Sigmoid colon (tissue), 7 donors: ENCODE measurements at regions of chr10 and their contacts with region 1.

Region 1: DNA sequence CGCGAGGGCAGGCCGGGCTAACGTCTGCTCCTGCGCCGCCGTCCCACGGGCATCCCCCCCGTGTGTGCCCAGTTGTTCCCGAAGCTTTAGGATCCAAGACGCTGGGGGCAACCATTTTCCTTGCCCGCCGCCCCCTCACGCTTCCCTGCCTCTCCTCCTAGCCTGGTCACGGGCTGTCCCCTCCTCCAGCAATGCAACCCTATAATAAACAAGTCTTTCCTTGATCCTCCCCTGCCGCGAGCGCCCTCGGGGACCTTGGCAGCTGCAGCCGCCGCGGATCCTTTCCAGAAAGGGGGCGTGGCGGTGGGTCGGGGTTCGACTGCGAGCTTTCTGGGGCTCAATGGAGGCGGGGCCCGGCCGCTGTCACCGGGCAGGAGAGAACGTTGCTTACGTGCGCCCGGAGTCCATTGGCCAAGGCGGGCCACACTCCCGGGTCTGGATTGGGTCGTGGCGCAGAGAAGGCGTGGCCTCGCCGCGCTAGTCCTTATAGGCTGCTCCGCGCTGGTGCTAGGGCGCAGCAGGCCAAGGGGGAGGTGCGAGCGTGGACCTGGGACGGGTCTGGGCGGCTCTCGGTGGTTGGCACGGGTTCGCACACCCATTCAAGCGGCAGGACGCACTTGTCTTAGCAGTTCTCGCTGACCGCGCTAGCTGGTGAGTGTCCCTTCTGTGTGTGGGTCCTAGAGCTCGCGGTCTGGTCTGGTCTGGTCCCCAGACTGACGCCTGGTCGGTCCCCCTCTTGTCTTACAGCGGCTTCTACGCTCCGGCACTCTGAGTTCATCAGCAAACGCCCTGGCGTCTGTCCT is at the start of gene DDIT4:
- DNase-seq: peak; percentile 100
- H3K4me3 ChIP-seq: peak within 1 kb of the TSS; percentile 76 to 90 (median 81)
- H3K27ac ChIP-seq: peak within 1 kb of the TSS; percentile 96 to 99 (median 97)
- H3K4me1 ChIP-seq: peaks cover 0 to 32% (median 29%) of the 10 kb centered on the region in 4 donors
- H3K27me3 ChIP-seq: no peaks in the 10 kb centered on the region
- CTCF ChIP-seq: no peak
- EP300 ChIP-seq: peak in 2 of 4 donors; percentile 53 to 67
- POLR2A ChIP-seq: peak; percentile 97 to 100
- total RNA-seq, gene DDIT4: 77.2 to 202 (median 133) TPM

Region 2: DNA sequence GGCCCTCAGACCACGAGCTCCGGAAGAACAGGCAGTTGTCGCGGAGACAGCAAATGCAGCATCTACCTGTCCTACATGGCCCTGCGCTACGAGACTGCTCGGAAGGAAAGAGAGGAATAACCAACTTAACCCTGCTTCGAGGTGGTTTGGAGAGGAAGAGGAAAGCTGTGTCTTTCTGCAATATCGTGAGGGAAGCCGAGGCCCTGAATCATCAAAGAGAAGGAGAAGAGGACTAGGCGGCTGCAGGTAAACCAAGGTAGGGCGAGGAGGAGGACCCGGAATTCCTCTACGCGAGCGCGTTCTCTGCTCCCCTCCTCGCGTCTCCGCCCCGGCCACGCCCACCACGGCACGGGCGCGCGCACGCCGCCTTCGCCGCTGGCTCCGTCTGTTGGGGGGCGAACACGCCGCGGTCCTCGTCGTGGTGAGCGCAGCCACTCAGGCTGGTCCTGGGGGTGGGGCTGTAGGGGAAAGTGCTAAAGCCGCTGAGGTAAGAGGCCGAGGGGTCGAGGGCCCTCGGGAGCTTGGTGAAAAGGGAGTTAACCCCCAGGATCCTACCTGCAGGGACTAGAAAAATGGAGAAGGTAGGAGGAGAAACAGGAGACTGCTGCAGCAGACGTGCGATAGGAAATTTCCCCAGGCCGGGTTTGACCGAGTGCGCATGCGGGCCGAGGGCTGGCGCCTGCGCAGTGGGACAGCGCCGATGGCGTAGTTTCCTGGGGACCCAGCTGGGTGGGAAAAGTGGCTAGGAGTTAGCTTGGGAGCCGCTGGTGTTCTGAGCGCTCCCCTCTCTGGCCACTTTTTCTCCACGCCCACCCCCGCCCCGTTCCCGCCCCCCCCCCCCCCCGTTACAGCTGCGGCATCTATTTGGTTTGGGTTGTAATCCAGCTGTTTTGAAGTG is 57.7 kb before region 1 on chr10 and contains the starts of genes ANAPC16 and ASCC1:
- intact Hi-C with region 1: loop called (anchors 2 kb)
- DNase-seq: peak; percentile 96
- H3K4me3 ChIP-seq: peak within 1 kb of the TSS; percentile 60 to 79 (median 70)
- H3K27ac ChIP-seq: peak within 1 kb of the TSS; percentile 86 to 99 (median 92)
- H3K4me1 ChIP-seq: peaks cover 0 to 51% (median 34%) of the 10 kb centered on the region in 4 donors
- H3K27me3 ChIP-seq: no peaks in the 10 kb centered on the region
- CTCF ChIP-seq: no peak
- EP300 ChIP-seq: peak in 1 of 4 donors; percentile 87
- POLR2A ChIP-seq: peak; percentile 88 to 95
- total RNA-seq, gene ANAPC16: 80.0 to 228 (median 157) TPM
- total RNA-seq, gene ASCC1: 21.0 to 53.7 (median 37.1) TPM

Region 3: GRCh38 chr10:72248468-72249151 is 25.0 kb before region 1 on chr10:
- intact Hi-C with region 1: loop called (anchors 2 kb)
- DNase-seq: peak; percentile 95
- H3K4me3 ChIP-seq: peak overlapping the region in 3 of 4 donors; percentile 15 to 36 (median 23)
- H3K27ac ChIP-seq: peak overlapping the region; percentile 91 to 95 (median 91)
- H3K4me1 ChIP-seq: peaks cover 0 to 98% (median 90%) of the 10 kb centered on the region in 4 donors
- H3K27me3 ChIP-seq: no peaks in the 10 kb centered on the region
- CTCF ChIP-seq: no peak
- EP300 ChIP-seq: peak; percentile 87 to 97 (median 91)
- POLR2A ChIP-seq: peak; percentile 24 to 28

Region 4: DNA sequence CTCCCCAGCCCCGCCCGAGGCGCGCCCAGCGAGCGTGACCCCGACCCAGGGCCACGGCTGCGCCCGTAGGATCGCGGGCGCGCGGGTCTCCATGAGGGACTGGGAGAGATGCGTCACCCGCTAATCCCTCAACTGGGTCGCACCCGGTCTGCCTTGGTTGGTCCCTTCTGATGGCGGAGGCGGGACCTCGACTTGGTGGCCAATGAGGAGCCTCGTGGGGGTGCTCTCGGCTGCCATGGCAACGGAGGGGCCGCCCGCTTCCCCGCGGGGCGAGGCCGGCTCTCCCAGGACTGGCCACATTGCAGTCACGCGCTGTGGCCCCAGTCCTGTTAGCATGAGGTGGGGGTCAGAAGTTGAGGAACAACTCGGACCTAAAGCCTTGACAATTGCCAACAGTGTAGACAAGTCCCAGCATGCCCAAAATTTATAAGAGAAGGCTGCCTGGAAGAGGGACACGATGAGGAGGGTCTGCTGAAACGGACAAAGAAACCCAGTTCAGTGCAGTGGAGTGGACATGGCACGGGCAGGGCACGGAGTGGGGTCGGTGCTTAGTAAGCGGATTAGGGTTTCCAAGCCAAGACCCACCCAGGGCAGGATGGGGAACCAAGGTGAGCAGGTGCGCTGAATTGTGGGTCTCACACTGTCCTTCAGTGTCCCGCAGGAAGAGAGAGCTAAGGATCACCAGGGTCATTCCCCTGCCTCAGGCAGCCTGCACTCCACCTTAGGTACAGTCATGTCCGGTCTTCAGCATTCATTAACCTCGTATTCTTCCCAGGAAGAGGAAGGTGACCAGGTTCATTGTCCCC is 24.6 kb after region 1 on chr10:
- intact Hi-C with region 1: loop called (anchors 2 kb)
- DNase-seq: peak; percentile 100
- H3K4me3 ChIP-seq: peak overlapping the region; percentile 57 to 83 (median 66)
- H3K27ac ChIP-seq: peak overlapping the region; percentile 90 to 94 (median 93)
- H3K4me1 ChIP-seq: peaks cover 0 to 17% (median 11%) of the 10 kb centered on the region in 4 donors
- H3K27me3 ChIP-seq: no peaks in the 10 kb centered on the region
- CTCF ChIP-seq: no peak
- EP300 ChIP-seq: no peak
- POLR2A ChIP-seq: peak; percentile 29 to 69

Region 5: DNA sequence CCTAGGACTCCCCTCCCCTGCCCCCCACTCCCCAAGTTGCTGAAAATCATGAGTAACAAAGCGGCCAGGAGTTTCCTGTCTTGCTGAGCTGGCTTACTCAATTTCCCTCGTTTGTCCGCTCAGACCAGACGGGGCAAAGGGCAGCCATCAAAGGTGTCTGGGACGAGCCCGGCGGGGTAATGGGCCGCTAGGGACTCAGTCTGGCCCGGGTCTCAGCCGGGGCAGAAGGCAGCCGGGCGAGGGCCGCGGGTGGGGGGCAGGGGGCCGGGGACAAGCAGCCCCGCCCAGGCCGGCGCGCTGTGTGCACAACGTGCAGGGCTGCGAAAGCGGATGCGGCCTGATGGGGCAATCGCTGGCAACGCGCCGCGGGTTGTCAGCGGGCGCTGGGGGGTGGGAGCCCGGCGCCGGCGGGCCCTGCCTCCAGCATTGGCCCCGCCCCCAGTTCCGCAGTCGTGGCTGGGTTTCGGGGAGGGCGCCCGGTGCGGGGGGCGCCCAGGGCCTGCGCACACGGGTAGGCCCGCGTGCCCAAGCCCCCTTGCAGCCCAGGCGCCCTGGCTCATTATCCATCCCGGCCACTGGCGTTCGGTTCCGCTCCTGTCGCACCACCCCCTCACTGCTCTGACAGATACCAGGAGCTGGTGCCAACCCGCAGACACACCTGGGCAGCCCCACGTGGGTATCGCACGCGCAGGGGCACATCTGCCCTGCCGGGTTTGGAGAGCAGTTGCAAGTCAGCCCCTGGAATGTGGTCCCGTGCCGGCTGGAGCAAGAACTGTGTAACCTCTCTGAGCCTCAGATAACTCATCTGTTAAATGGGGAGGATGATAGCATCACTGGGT is 46.0 kb after region 1 on chr10:
- intact Hi-C with region 1: loop called (anchors 1 kb)
- DNase-seq: peak; percentile 97
- H3K4me3 ChIP-seq: peak overlapping the region; percentile 17 to 51 (median 44)
- H3K27ac ChIP-seq: peak overlapping the region; percentile 84 to 93 (median 86)
- H3K4me1 ChIP-seq: peaks cover 0 to 56% (median 56%) of the 10 kb centered on the region in 4 donors
- H3K27me3 ChIP-seq: no peaks in the 10 kb centered on the region
- CTCF ChIP-seq: peak in 1 of 4 experiments; percentile 16
- EP300 ChIP-seq: peak in 2 of 4 donors; percentile 27 to 69
- POLR2A ChIP-seq: no peak

Region 6: GRCh38 chr10:72337020-72337629 is 63.5 kb after region 1 on chr10:
- intact Hi-C with region 1: loop called (anchors 2 kb)
- DNase-seq: peak; percentile 94
- H3K4me3 ChIP-seq: no peak overlapping the region
- H3K27ac ChIP-seq: peak overlapping the region; percentile 75 to 87 (median 80)
- H3K4me1 ChIP-seq: peaks cover 0 to 48% (median 41%) of the 10 kb centered on the region in 4 donors
- H3K27me3 ChIP-seq: no peaks in the 10 kb centered on the region
- CTCF ChIP-seq: peak; percentile 88 to 94 (median 92)
- EP300 ChIP-seq: no peak
- POLR2A ChIP-seq: no peak

Region 7: DNA sequence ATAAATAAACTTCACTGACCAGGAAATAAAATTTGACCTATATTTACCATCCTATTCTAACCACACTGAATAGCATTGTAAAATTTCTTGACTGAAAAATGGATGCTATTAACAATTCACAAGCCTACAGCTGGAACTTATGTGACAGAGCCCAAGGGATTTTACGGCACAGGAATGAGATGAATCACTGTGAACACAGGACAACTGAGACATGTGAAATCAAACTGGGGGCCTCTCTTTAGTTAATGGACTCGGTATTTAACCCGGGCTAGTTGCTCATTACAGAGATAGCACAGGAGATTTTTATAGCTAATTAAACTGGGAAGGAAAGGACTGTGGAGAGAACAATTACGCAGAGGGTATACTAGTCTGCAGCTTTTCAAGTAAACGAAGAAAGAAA is 251.7 kb after region 1 on chr10:
- intact Hi-C with region 1: no loop called
- DNase-seq: no peak
- H3K4me3 ChIP-seq: no peak overlapping the region
- H3K27ac ChIP-seq: no peak overlapping the region
- H3K4me1 ChIP-seq: peaks cover 0 to 5% (median 0%) of the 10 kb centered on the region in 4 donors
- H3K27me3 ChIP-seq: no peaks in the 10 kb centered on the region
- CTCF ChIP-seq: no peak
- EP300 ChIP-seq: no peak
- POLR2A ChIP-seq: no peak